Lower leg skin (tissue), 4 donors: ENCODE measurements at regions of chr19 and their contacts with region 1.

Region 1: GRCh38 chr19:8654591-8655339 is 24.3 kb downstream of the NFILZ start:
- DNase-seq: no peak
- H3K4me3 ChIP-seq: no peak overlapping the region
- CTCF ChIP-seq: peak in 1 of 3 donors; percentile 97
- POLR2A ChIP-seq: no peak

Region 2: GRCh38 chr19:9086761-9087160 is 432.0 kb after region 1 on chr19 and contains the start of gene OR1M1:
- intact Hi-C with region 1: loop called (anchors 10 kb)
- DNase-seq: no peak
- H3K4me3 ChIP-seq: no peak within 1 kb of the TSS
- CTCF ChIP-seq: no peak
- POLR2A ChIP-seq: no peak
- total RNA-seq, gene OR1M1: not detected